ENCODE measurements at regions of chr12 and their contacts with region 1.

Region 1: DNA sequence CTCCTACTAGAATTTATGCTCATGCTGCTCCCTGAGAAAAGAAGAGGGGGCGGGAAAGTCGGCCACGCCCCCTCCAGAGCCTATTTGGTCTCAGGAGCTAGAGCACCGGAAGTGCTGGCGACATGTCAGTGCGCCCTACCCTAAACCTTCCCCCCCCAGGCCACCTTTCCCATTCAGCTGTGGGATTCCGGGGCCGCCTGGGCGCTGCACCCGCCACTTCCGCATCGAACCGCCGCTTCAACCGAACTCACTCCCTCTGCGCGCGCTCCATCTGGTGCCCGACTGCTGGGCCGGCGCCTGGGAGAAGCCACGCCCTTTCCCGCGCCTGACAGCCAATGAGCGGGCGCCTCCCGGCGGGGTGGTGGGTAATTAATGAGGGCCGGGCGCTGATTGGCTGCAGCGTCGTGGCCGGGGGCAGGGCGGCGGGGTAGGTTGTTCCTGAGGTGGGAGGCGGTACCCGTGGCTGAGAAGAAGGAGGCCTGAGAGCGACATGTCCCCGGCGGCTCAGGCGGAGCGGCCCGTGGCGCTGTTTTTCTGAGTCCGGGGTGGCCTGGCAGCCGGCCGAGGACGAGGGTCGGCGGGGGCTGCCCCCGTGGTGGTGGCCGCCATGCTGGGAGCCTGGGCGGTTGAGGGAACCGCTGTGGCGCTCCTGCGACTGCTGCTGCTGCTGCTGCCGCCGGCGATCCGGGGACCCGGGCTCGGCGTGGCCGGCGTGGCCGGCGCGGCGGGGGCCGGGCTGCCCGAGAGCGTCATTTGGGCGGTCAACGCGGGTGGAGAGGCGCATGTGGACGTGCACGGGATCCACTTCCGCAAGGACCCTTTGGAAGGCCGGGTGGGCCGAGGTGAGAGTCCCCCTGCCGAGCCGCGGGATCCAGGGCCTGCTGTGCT is at the start of gene MLEC:
- DNase-seq: no peak
- ATAC-seq: peak; percentile 77
- H3K4me3 ChIP-seq: peak within 1 kb of the TSS; percentile 78 to 91 (median 81)
- H3K4me3 Mint-ChIP-seq: peak within 1 kb of the TSS; percentile 93
- H3K27ac ChIP-seq: peak within 1 kb of the TSS; percentile 84 to 87
- H3K27ac Mint-ChIP-seq: peak within 1 kb of the TSS; percentile 96
- H3K4me1 ChIP-seq: peaks cover 41 to 46% of the 10 kb centered on the region in 2 donors
- H3K4me1 Mint-ChIP-seq: peaks cover 49% of the 10 kb centered on the region
- H3K27me3 ChIP-seq: no peaks in the 10 kb centered on the region
- H3K27me3 Mint-ChIP-seq: no peaks in the 10 kb centered on the region
- CTCF ChIP-seq: no peak
- total RNA-seq, gene MLEC: 39.8 and 52.6 TPM in 2 replicates

Region 2: DNA sequence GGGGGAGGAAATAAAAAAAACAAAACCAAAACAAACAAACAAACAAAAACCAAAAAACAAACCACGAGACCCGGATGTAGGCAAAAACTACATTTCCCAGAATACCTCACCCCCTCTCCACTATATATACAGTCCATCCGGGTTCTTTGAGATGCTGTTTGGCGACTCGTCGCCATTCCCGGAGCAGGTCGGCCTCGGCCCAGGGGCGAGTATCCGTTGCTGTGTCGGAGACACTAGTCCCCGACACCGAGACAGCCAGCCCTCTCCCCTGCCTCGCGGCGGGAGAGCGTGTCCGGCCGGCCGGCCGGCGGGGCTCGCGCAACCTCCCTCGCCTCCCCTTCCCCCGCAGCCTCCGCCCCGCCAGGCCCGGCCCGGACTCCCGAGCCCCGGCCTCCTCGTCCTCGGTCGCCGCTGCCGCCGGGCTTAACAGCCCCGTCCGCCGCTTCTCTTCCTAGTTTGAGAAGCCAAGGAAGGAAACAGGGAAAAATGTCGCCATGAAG is 152.7 kb before region 1 on chr12 and contains the start of gene RNF10:
- CTCF ChIA-PET with region 1: no interaction called
- POLR2A ChIA-PET with region 1: no interaction called
- intact Hi-C with region 1: loop called (anchors 2 kb)
- DNase-seq: peak; percentile 93
- ATAC-seq: peak; percentile 77
- H3K4me3 ChIP-seq: peak within 1 kb of the TSS; percentile 69 to 93 (median 80)
- H3K4me3 Mint-ChIP-seq: peak within 1 kb of the TSS; percentile 97
- H3K27ac ChIP-seq: peak within 1 kb of the TSS; percentile 64 to 94
- H3K27ac Mint-ChIP-seq: peak within 1 kb of the TSS; percentile 97
- H3K4me1 ChIP-seq: peaks cover 47 to 55% of the 10 kb centered on the region in 2 donors
- H3K4me1 Mint-ChIP-seq: peaks cover 57% of the 10 kb centered on the region
- H3K27me3 ChIP-seq: no peaks in the 10 kb centered on the region
- H3K27me3 Mint-ChIP-seq: no peaks in the 10 kb centered on the region
- CTCF ChIP-seq: no peak
- total RNA-seq, gene RNF10: 227 and 236 TPM in 2 replicates

Region 3: GRCh38 chr12:120710031-120710804 is 23.3 kb after region 1 on chr12 and contains the start of gene UNC119B:
- CTCF ChIA-PET with region 1: interaction called, 6 read pairs
- POLR2A ChIA-PET with region 1: interaction called, 5 read pairs
- intact Hi-C with region 1: loop called (anchors 1 kb)
- DNase-seq: peak; percentile 80
- ATAC-seq: peak; percentile 88
- H3K4me3 ChIP-seq: peak within 1 kb of the TSS; percentile 27 to 89 (median 68)
- H3K4me3 Mint-ChIP-seq: peak within 1 kb of the TSS; percentile 91
- H3K27ac ChIP-seq: peak within 1 kb of the TSS in 1 of 2 donors; percentile 71
- H3K27ac Mint-ChIP-seq: peak within 1 kb of the TSS; percentile 79
- H3K4me1 ChIP-seq: peaks cover 17 to 26% of the 10 kb centered on the region in 2 donors
- H3K4me1 Mint-ChIP-seq: peaks cover 24% of the 10 kb centered on the region
- H3K27me3 ChIP-seq: no peaks in the 10 kb centered on the region
- H3K27me3 Mint-ChIP-seq: no peaks in the 10 kb centered on the region
- CTCF ChIP-seq: no peak
- total RNA-seq, gene UNC119B: 19.2 and 22.7 TPM in 2 replicates

Region 4: DNA sequence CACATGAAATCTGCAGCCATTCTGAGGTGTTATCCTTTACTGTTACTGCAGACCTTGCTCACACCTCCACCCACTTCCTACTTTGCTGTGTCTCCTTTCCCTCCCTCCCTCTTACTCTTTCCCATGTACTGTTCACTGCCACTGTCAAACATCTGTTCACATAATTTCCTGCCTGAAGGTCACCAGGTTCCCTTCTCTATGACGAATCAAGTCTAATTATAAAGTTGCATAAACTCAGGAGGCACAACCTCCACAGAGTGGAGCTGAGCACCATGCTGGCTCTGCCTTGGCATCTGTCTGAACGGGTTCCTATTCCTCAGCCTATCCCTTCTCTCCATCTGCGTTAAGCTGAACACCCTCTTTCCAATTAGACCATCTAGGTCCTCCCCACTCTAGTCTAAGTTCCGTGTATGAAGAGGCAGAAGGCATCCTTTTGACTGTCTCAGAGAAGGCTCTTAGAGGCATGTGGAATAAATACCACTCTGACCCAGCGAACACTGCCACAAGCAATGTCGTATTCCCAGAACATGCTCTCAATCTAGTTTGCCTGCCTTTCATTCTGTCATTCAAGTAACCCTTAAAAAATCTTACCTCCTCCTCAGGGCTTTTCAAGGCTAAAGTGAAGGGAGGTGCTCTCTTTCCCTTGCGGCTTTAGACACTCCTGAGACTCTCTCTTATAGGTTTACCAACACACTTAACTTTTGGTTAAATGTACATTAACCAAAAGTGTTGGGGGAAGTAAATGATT is 87.4 kb after region 1 on chr12:
- CTCF ChIA-PET with region 1: no interaction called
- POLR2A ChIA-PET with region 1: no interaction called
- intact Hi-C with region 1: no loop called
- DNase-seq: no peak
- ATAC-seq: no peak
- H3K4me3 ChIP-seq: no peak overlapping the region
- H3K4me3 Mint-ChIP-seq: no peak overlapping the region
- H3K27ac ChIP-seq: no peak overlapping the region
- H3K27ac Mint-ChIP-seq: no peak overlapping the region
- H3K4me1 ChIP-seq: no peaks in the 10 kb centered on the region
- H3K4me1 Mint-ChIP-seq: no peaks in the 10 kb centered on the region
- H3K27me3 ChIP-seq: no peaks in the 10 kb centered on the region
- H3K27me3 Mint-ChIP-seq: no peaks in the 10 kb centered on the region
- CTCF ChIP-seq: no peak

Region 5: GRCh38 chr12:120856980-120857379 is 170.0 kb after region 1 on chr12:
- CTCF ChIA-PET with region 1: interaction called, 3 read pairs
- POLR2A ChIA-PET with region 1: no interaction called
- intact Hi-C with region 1: loop called (anchors 10 kb)
- DNase-seq: peak; percentile 58
- ATAC-seq: peak; percentile 43
- H3K4me3 ChIP-seq: no peak overlapping the region
- H3K4me3 Mint-ChIP-seq: peak overlapping the region; percentile 61
- H3K27ac ChIP-seq: peak overlapping the region in 1 of 2 donors; percentile 50
- H3K27ac Mint-ChIP-seq: peak overlapping the region; percentile 43
- H3K4me1 ChIP-seq: peaks cover 42 to 50% of the 10 kb centered on the region in 2 donors
- H3K4me1 Mint-ChIP-seq: peaks cover 64% of the 10 kb centered on the region
- H3K27me3 ChIP-seq: no peaks in the 10 kb centered on the region
- H3K27me3 Mint-ChIP-seq: no peaks in the 10 kb centered on the region
- CTCF ChIP-seq: peak; percentile 22

Region 6: GRCh38 chr12:121015825-121016766 is 329.2 kb after region 1 on chr12 and contains the start of gene C12orf43:
- CTCF ChIA-PET with region 1: no interaction called
- POLR2A ChIA-PET with region 1: no interaction called
- intact Hi-C with region 1: loop called (anchors 1 kb)
- DNase-seq: peak; percentile 92
- ATAC-seq: peak; percentile 99
- H3K4me3 ChIP-seq: peak within 1 kb of the TSS; percentile 86 to 100 (median 96)
- H3K4me3 Mint-ChIP-seq: peak within 1 kb of the TSS; percentile 96
- H3K27ac ChIP-seq: peak within 1 kb of the TSS; percentile 61 to 74
- H3K27ac Mint-ChIP-seq: peak within 1 kb of the TSS; percentile 84
- H3K4me1 ChIP-seq: peaks cover 4 to 7% of the 10 kb centered on the region in 2 donors
- H3K4me1 Mint-ChIP-seq: peaks cover 14% of the 10 kb centered on the region
- H3K27me3 ChIP-seq: no peaks in the 10 kb centered on the region
- H3K27me3 Mint-ChIP-seq: no peaks in the 10 kb centered on the region
- CTCF ChIP-seq: no peak
- total RNA-seq, gene C12orf43: 18.9 and 20.5 TPM in 2 replicates